Activated naive CD4-positive, alpha-beta T cell treated with anti-CD3 and anti-CD28 coated beads for 36 hours (primary cell): ENCODE measurements at regions of chr13 and their contacts with region 1.

Region 1: GRCh38 chr13:27620377-27621115 is at the start of gene LNX2:
- DNase-seq: peak; percentile 97
- H3K4me3 Mint-ChIP-seq: peak within 1 kb of the TSS; percentile 87
- H3K27ac Mint-ChIP-seq: peak within 1 kb of the TSS; percentile 89
- H3K4me1 Mint-ChIP-seq: peaks cover 52% of the 10 kb centered on the region
- H3K27me3 Mint-ChIP-seq: no peaks in the 10 kb centered on the region
- total RNA-seq, gene LNX2: 5.8 to 6.4 TPM

Region 2: DNA sequence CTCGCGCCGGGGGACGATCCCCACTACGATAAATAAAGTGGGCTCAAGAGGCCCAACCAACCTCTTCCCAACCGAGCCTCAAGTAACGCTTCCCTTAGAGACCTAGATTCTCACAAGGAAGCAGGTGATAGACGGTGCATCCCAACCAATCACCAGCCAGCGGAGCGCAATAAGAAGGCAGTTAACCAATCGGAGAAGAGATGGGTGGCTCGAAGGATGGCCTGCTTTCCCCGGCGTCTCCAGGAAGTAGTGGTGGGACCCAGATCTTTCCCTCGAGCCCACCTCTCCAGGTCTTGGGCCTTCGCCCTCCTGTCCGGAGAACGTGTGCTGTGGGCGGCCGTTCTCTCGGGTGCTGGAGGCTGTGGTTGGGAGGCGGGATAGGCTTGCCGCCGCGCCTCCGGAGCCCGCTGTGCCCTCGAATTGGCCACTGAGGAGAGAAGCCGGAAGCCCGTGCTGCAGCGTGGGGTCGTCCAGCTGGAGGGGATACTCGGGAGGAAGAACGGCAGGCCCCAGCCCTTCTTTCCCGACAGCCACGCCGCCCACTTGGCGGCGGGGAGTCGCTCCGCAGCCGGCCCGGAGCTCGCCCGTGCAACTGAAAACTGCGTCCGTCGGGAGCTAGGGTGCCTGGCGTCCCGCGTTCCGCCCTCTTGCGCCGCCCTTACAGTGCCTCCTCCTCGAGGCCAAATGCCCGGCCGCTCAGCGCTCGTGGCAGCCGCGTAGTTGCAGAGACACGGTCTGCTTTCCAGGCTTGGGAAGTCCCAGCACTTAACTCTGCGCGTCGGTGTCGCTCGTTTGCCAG is 1398.6 kb before region 1 on chr13 and contains the start of gene RNF6:
- CTCF ChIA-PET with region 1: no interaction called
- intact Hi-C with region 1: loop called (anchors 2 kb)
- DNase-seq: peak; percentile 92
- H3K4me3 Mint-ChIP-seq: peak within 1 kb of the TSS; percentile 91
- H3K27ac Mint-ChIP-seq: peak within 1 kb of the TSS; percentile 100
- H3K4me1 Mint-ChIP-seq: peaks cover 30% of the 10 kb centered on the region
- H3K27me3 Mint-ChIP-seq: peaks cover 2% of the 10 kb centered on the region
- total RNA-seq, gene RNF6: 38.2 to 39.4 TPM

Region 3: GRCh38 chr13:27035982-27036981 is 584.3 kb before region 1 on chr13:
- CTCF ChIA-PET with region 1: no interaction called
- intact Hi-C with region 1: no loop called
- DNase-seq: no peak
- H3K4me3 Mint-ChIP-seq: no peak overlapping the region
- H3K27ac Mint-ChIP-seq: no peak overlapping the region
- H3K4me1 Mint-ChIP-seq: peaks cover 5% of the 10 kb centered on the region
- H3K27me3 Mint-ChIP-seq: peaks cover 22% of the 10 kb centered on the region

Region 4: GRCh38 chr13:27449936-27450828 is 170.4 kb before region 1 on chr13 and contains the start of gene MTIF3:
- CTCF ChIA-PET with region 1: no interaction called
- intact Hi-C with region 1: loop called (anchors 1 kb)
- DNase-seq: peak; percentile 97
- H3K4me3 Mint-ChIP-seq: peak within 1 kb of the TSS; percentile 94
- H3K27ac Mint-ChIP-seq: peak within 1 kb of the TSS; percentile 99
- H3K4me1 Mint-ChIP-seq: peaks cover 55% of the 10 kb centered on the region
- H3K27me3 Mint-ChIP-seq: no peaks in the 10 kb centered on the region
- total RNA-seq, gene MTIF3: 34.0 to 42.1 TPM

Region 5: DNA sequence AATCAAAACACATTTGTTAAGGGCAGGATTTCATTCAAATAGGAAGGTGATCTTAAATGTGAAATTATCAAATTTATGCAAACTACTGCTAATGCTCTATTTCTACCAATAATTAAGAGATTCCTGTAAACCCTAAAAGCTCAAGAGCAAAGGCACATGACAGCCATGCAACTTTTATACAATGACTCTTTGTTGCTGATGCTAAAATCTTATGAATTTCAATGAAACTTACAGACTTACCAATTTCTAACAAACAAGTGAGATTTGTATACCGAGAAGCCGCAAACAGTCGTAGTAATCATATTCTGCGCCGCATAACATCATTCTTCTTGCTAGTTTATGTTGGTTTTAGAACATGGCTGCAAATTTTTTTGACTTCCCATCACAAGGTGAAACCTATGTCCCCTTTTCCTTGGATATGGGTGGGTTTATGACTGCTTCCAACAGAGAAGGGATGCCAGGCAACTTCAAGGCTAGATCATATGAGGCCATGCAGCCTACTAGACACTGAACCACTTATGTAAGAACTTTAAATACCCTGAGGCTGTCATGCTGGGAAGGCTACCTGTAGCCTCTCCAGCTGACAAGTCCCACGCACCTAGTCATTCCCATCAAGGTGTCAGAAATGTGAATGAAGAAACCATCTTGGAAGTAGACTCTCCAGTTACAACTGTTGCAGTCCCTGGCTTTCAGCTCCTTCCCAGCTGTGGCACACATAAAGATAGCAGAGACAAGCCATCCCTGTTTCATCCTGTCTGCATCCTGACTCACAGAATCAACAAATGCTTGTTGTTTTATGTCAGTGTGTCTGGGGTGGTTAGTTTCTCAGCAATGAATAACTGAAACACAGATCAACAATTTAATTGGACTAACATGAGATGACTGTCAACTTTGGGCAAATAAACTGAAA is 42.2 kb before region 1 on chr13:
- CTCF ChIA-PET with region 1: no interaction called
- intact Hi-C with region 1: loop called (anchors 5 kb)
- DNase-seq: no peak
- H3K4me3 Mint-ChIP-seq: no peak overlapping the region
- H3K27ac Mint-ChIP-seq: no peak overlapping the region
- H3K4me1 Mint-ChIP-seq: peaks cover 5% of the 10 kb centered on the region
- H3K27me3 Mint-ChIP-seq: no peaks in the 10 kb centered on the region

Region 6: GRCh38 chr13:27654816-27655215 is 34.3 kb after region 1 on chr13:
- CTCF ChIA-PET with region 1: no interaction called
- intact Hi-C with region 1: no loop called
- DNase-seq: no peak
- H3K4me3 Mint-ChIP-seq: no peak overlapping the region
- H3K27ac Mint-ChIP-seq: no peak overlapping the region
- H3K4me1 Mint-ChIP-seq: no peaks in the 10 kb centered on the region
- H3K27me3 Mint-ChIP-seq: no peaks in the 10 kb centered on the region

Region 7: DNA sequence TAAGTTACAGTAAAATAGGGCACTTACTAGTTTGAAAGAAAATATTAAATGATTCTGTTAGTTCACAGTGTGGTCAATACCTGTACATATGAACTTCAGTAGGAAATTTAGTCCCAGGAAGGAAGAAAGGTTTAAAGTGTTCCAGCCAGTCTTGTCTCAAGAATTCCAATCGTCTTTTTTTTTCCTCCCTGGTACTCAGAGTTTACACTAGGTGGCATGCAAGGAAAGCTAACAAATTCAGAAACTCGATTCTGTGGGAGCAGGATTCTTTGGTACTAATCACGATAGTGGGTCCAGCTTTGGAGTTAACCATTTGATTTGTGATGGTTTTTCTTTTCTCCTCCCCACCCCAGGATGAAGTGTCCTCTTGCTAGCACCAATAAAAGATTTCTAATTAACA is 44.8 kb after region 1 on chr13:
- CTCF ChIA-PET with region 1: no interaction called
- intact Hi-C with region 1: no loop called
- DNase-seq: no peak
- H3K4me3 Mint-ChIP-seq: no peak overlapping the region
- H3K27ac Mint-ChIP-seq: no peak overlapping the region
- H3K4me1 Mint-ChIP-seq: peaks cover 7% of the 10 kb centered on the region
- H3K27me3 Mint-ChIP-seq: no peaks in the 10 kb centered on the region

Region 8: GRCh38 chr13:28658796-28659620 is 1038.5 kb after region 1 on chr13 and contains the start of gene POMP:
- CTCF ChIA-PET with region 1: no interaction called
- intact Hi-C with region 1: loop called (anchors 5 kb)
- DNase-seq: peak; percentile 95
- H3K4me3 Mint-ChIP-seq: peak within 1 kb of the TSS; percentile 97
- H3K27ac Mint-ChIP-seq: peak within 1 kb of the TSS; percentile 98
- H3K4me1 Mint-ChIP-seq: peaks cover 56% of the 10 kb centered on the region
- H3K27me3 Mint-ChIP-seq: no peaks in the 10 kb centered on the region
- total RNA-seq, gene POMP: 106 to 108 TPM